ENCODE measurements at regions of chr10 and their contacts with region 1.

Region 1: GRCh38 chr10:14425034-14425433 is 94.3 kb upstream of the FRMD4A start:
- DNase-seq: no peak
- ATAC-seq: no peak
- H3K4me3 ChIP-seq: no peak overlapping the region
- H3K27ac ChIP-seq: no peak overlapping the region
- H3K4me1 ChIP-seq: no peaks in the 10 kb centered on the region; the same call in 1 of the 2 replicates
- H3K27me3 ChIP-seq: no peaks in the 10 kb centered on the region
- CTCF ChIP-seq: no peak
- POLR2A ChIP-seq: no peak
- RAD21 ChIP-seq: no peak

Region 2: GRCh38 chr10:14466257-14466656 is 41.2 kb after region 1 on chr10:
- CTCF ChIA-PET with region 1: interaction called, 10 read pairs
- POLR2A ChIA-PET with region 1: no interaction called
- dilution Hi-C with region 1: no loop called
- in situ Hi-C with region 1: no loop called
- intact Hi-C with region 1: no loop called
- DNase-seq: peak; percentile 49
- ATAC-seq: no peak
- H3K4me3 ChIP-seq: no peak overlapping the region
- H3K27ac ChIP-seq: no peak overlapping the region
- H3K4me1 ChIP-seq: peaks cover 6% of the 10 kb centered on the region
- H3K27me3 ChIP-seq: no peaks in the 10 kb centered on the region
- CTCF ChIP-seq: no peak
- POLR2A ChIP-seq: no peak
- RAD21 ChIP-seq: no peak

Region 3: DNA sequence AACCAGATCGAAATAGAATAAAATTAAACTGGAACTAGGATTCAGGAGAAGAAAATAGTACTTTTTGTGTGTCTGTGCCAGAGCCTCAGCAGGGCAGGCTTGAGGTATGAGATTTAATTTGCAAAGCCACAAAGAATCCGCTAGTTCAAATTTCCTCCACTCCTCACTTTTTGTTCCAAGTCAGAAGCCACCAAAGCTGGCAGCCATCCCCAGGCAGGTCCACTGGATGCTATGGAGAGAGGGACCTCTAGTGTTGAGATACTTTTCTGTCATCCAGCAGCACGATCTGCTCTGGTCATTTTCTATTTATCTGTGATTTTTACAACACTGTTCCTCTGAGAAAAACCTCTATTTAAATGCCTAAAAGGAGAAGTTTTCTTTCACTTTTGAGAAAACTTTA is 53.6 kb after region 1 on chr10:
- CTCF ChIA-PET with region 1: no interaction called
- POLR2A ChIA-PET with region 1: no interaction called
- dilution Hi-C with region 1: no loop called
- in situ Hi-C with region 1: no loop called
- intact Hi-C with region 1: no loop called
- DNase-seq: peak; percentile 84
- ATAC-seq: peak; percentile 89
- H3K4me3 ChIP-seq: no peak overlapping the region
- H3K27ac ChIP-seq: no peak overlapping the region
- H3K4me1 ChIP-seq: peaks cover 16% of the 10 kb centered on the region; the same call in 1 of the 2 replicates
- H3K27me3 ChIP-seq: no peaks in the 10 kb centered on the region
- CTCF ChIP-seq: peak; percentile 93
- POLR2A ChIP-seq: peak; percentile 61
- RAD21 ChIP-seq: peak; percentile 98